ENCODE measurements at regions of chr11 and their contacts with region 1.

Region 1: GRCh38 chr11:47051217-47051616 is 114.7 kb downstream of the CSTPP1 start:
- DNase-seq: no peak
- H3K4me3 ChIP-seq: no peak overlapping the region
- H3K27ac ChIP-seq: no peak overlapping the region
- H3K27me3 ChIP-seq: no peaks in the 10 kb centered on the region
- CTCF ChIP-seq: no peak

Region 2: GRCh38 chr11:47010179-47010578 is 41.0 kb before region 1 on chr11:
- CTCF ChIA-PET with region 1: no interaction called
- POLR2A ChIA-PET with region 1: interaction called, 10 read pairs
- DNase-seq: no peak
- H3K4me3 ChIP-seq: no peak overlapping the region
- H3K27ac ChIP-seq: no peak overlapping the region
- H3K27me3 ChIP-seq: no peaks in the 10 kb centered on the region
- CTCF ChIP-seq: no peak